Prostate gland (tissue), 2 donors: ENCODE measurements at regions of chr4 and their contacts with region 1.

Region 1: GRCh38 chr4:42519803-42520417 is 122.6 kb downstream of the SHISA3 start:
- DNase-seq: peak; percentile 43
- H3K4me3 ChIP-seq: no peak overlapping the region
- H3K27ac ChIP-seq: no peak overlapping the region
- H3K4me1 ChIP-seq: no peaks in the 10 kb centered on the region
- H3K27me3 ChIP-seq: no peaks in the 10 kb centered on the region
- CTCF ChIP-seq: peak; percentile 10 to 85 (median 76)
- POLR2A ChIP-seq: no peak

Region 2: GRCh38 chr4:42282081-42282901 is 237.6 kb before region 1 on chr4:
- intact Hi-C with region 1: loop called (anchors 2 kb)
- DNase-seq: peak; percentile 58
- H3K4me3 ChIP-seq: no peak overlapping the region
- H3K27ac ChIP-seq: no peak overlapping the region
- H3K4me1 ChIP-seq: no peaks in the 10 kb centered on the region
- H3K27me3 ChIP-seq: no peaks in the 10 kb centered on the region
- CTCF ChIP-seq: peak in 3 of 4 experiments; percentile 58 to 76 (median 64)
- POLR2A ChIP-seq: no peak

Region 3: GRCh38 chr4:42371306-42372252 is 148.3 kb before region 1 on chr4:
- intact Hi-C with region 1: loop called (anchors 10 kb)
- DNase-seq: no peak
- H3K4me3 ChIP-seq: no peak overlapping the region
- H3K27ac ChIP-seq: no peak overlapping the region
- H3K4me1 ChIP-seq: no peaks in the 10 kb centered on the region
- H3K27me3 ChIP-seq: no peaks in the 10 kb centered on the region
- CTCF ChIP-seq: peak in 3 of 4 experiments; percentile 31 to 57 (median 56)
- POLR2A ChIP-seq: no peak

Region 4: GRCh38 chr4:42436928-42437565 is 82.9 kb before region 1 on chr4:
- intact Hi-C with region 1: no loop called
- DNase-seq: no peak
- H3K4me3 ChIP-seq: no peak overlapping the region
- H3K27ac ChIP-seq: no peak overlapping the region
- H3K4me1 ChIP-seq: no peaks in the 10 kb centered on the region
- H3K27me3 ChIP-seq: no peaks in the 10 kb centered on the region
- CTCF ChIP-seq: no peak
- POLR2A ChIP-seq: no peak